ENCODE measurements at regions of chr6 and their contacts with region 1.

Region 1: GRCh38 chr6:53417140-53417539 is 68.4 kb upstream of the ELOVL5 start:
- DNase-seq: no peak
- ATAC-seq: no peak
- H3K4me3 ChIP-seq: no peak overlapping the region
- H3K4me3 Mint-ChIP-seq: no peak overlapping the region
- H3K27ac ChIP-seq: no peak overlapping the region
- H3K27ac Mint-ChIP-seq: no peak overlapping the region
- H3K4me1 ChIP-seq: no peaks in the 10 kb centered on the region
- H3K4me1 Mint-ChIP-seq: no peaks in the 10 kb centered on the region
- H3K27me3 ChIP-seq: no peaks in the 10 kb centered on the region
- H3K27me3 Mint-ChIP-seq: no peaks in the 10 kb centered on the region
- CTCF ChIP-seq: no peak

Region 2: DNA sequence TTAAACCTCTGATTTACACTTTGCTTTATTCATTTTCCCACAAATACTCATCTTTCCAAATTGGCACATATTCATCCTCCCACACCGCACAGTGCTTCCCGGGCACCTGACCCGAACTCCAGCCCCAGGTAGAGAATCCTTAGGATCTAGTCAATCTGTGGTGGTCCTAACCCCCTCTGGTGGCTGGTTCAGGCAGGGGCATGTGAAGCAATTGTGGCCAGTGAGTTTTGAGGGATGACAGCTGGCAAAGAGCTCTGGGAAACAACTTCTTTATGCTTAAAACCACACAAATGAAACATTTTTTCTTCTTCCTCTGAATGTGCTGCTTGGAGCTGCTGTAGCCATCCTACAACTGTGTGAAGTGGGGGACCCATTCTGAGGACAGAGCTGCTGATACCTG is 123.0 kb before region 1 on chr6:
- intact Hi-C with region 1: loop called (anchors 5 kb)
- DNase-seq: peak in 1 of 2 donors; percentile 51
- ATAC-seq: peak in 1 of 3 donors; percentile 41
- H3K4me3 ChIP-seq: no peak overlapping the region
- H3K4me3 Mint-ChIP-seq: no peak overlapping the region
- H3K27ac ChIP-seq: no peak overlapping the region
- H3K27ac Mint-ChIP-seq: peak overlapping the region; percentile 24 to 88
- H3K4me1 ChIP-seq: peaks cover 27% of the 10 kb centered on the region
- H3K4me1 Mint-ChIP-seq: peaks cover 76 to 78% of the 10 kb centered on the region in 2 donors
- H3K27me3 ChIP-seq: no peaks in the 10 kb centered on the region
- H3K27me3 Mint-ChIP-seq: no peaks in the 10 kb centered on the region
- CTCF ChIP-seq: peak; percentile 44